Mucosa of descending colon (tissue), 3 donors: ENCODE measurements at regions of chr1 and their contacts with region 1.

Region 1: DNA sequence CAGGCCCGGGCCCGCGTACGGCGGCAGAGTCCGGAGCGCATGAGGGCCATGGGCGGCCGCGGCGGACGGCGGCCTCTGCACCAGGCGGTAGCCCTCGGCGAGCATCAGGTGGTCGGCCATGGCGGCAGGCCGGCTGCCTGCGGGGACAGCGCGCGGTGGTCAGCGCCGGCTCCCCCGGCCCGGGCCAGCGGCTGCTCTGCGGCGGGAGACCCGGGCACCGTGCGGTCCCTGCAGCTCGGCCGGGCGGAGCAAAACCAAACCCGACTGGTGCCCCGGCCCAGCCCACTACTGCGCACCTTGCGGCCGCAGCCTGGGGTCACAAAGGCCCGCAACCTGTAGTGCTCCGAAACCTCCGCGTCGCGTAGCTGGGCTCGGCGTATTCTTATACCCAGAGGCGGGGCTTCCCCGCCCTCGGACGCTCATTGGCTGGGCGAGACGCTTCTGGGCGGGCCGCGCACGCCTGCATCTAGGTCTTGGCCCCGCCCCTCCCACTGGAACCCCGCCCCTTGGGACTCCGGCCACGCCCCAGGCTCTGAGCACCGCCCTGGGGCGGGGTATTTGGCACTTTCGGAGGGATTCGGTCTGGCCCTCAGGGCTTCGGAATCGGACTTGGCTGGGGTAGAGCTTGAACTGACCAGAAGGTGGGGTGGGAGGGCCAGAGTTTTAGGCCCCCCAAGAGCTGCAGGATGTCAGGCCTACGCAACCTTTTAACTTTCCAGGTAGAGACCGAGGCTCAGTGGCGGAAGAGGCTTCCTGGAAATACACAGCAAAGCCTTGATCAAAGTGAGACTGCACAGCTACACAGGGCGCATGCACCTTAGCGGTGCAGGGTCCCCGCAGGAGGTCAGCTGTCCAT is at the start of gene CITED4:
- DNase-seq: peak; percentile 97 to 98 (median 98)
- ATAC-seq: peak; percentile 99
- H3K4me3 ChIP-seq: peak within 1 kb of the TSS; percentile 44
- H3K4me1 ChIP-seq: no peaks in the 10 kb centered on the region
- CTCF ChIP-seq: peak; percentile 14
- total RNA-seq, gene CITED4: 1.9 to 45.1 (median 4.7) TPM

Region 2: GRCh38 chr1:40951943-40952743 is 89.9 kb after region 1 on chr1:
- intact Hi-C with region 1: loop called in 1 of 2 experiments (anchors 5 kb)
- DNase-seq: peak; percentile 68 to 81 (median 77)
- ATAC-seq: peak; percentile 95
- H3K4me3 ChIP-seq: no peak overlapping the region
- H3K4me1 ChIP-seq: no peaks in the 10 kb centered on the region
- CTCF ChIP-seq: peak; percentile 81